ENCODE measurements at regions of chr2 and their contacts with region 1.

Region 1: GRCh38 chr2:51025906-51026555 is 5.9 kb downstream of the NRXN1 start:
- DNase-seq: no peak
- ATAC-seq: no peak
- H3K4me3 ChIP-seq: no peak overlapping the region
- H3K27ac ChIP-seq: no peak overlapping the region
- H3K4me1 ChIP-seq: no peaks in the 10 kb centered on the region
- H3K27me3 ChIP-seq: peaks cover 0 to 9% (median 0%) of the 10 kb centered on the region in 3 donors
- CTCF ChIP-seq: no peak

Region 2: GRCh38 chr2:50808694-50809093 is 217.3 kb before region 1 on chr2:
- intact Hi-C with region 1: no loop called
- DNase-seq: no peak
- ATAC-seq: no peak
- H3K4me3 ChIP-seq: no peak overlapping the region
- H3K27ac ChIP-seq: no peak overlapping the region
- H3K4me1 ChIP-seq: no peaks in the 10 kb centered on the region
- H3K27me3 ChIP-seq: no peaks in the 10 kb centered on the region
- CTCF ChIP-seq: no peak

Region 3: GRCh38 chr2:51071191-51071590 is 45.2 kb after region 1 on chr2:
- intact Hi-C with region 1: loop called in 1 of 2 experiments (anchors 2 kb)
- DNase-seq: no peak
- ATAC-seq: no peak
- H3K4me3 ChIP-seq: no peak overlapping the region
- H3K27ac ChIP-seq: no peak overlapping the region
- H3K4me1 ChIP-seq: no peaks in the 10 kb centered on the region
- H3K27me3 ChIP-seq: no peaks in the 10 kb centered on the region
- CTCF ChIP-seq: no peak

Measured in psoas muscle (tissue), 8 donors.